ENCODE measurements at regions of chr21 and their contacts with region 1.

Region 1: DNA sequence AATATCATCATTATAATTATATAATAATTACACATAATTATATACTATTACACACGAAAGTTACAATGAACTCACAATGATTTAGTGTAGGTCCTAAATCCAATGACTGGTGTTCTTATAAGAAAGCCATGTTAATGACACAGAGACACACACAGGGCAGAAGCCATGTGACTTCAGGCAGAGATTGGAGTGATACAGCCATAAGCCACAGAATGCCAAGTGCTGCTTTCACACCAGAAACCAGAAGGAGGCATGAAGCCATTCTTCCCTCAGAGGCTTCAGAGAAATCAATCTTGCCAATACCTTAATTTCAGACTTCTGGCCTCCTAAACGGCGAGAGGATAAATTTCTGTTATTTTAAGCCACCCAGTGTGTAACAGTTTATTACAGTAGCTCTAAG is 147.4 kb upstream of the KRTAP19-8 start:
- DNase-seq: no peak
- H3K4me3 Mint-ChIP-seq: peak overlapping the region; percentile 66
- H3K27ac Mint-ChIP-seq: peak overlapping the region; percentile 69
- H3K4me1 Mint-ChIP-seq: peaks cover 75% of the 10 kb centered on the region
- H3K27me3 Mint-ChIP-seq: no peaks in the 10 kb centered on the region

Region 2: GRCh38 chr21:31041295-31042079 is 144.2 kb before region 1 on chr21:
- CTCF ChIA-PET with region 1: no interaction called
- POLR2A ChIA-PET with region 1: no interaction called
- DNase-seq: no peak
- H3K4me3 Mint-ChIP-seq: no peak overlapping the region
- H3K27ac Mint-ChIP-seq: no peak overlapping the region
- H3K4me1 Mint-ChIP-seq: peaks cover 3% of the 10 kb centered on the region
- H3K27me3 Mint-ChIP-seq: peaks cover 6% of the 10 kb centered on the region

Region 3: GRCh38 chr21:31198575-31198974 is 12.9 kb after region 1 on chr21:
- CTCF ChIA-PET with region 1: interaction called, 17 read pairs
- POLR2A ChIA-PET with region 1: interaction called, 10 read pairs
- DNase-seq: no peak
- H3K4me3 Mint-ChIP-seq: no peak overlapping the region
- H3K27ac Mint-ChIP-seq: no peak overlapping the region
- H3K4me1 Mint-ChIP-seq: peaks cover 39% of the 10 kb centered on the region
- H3K27me3 Mint-ChIP-seq: no peaks in the 10 kb centered on the region

Measured in activated CD4-positive, alpha-beta memory T cell treated with anti-CD3 and anti-CD28 coated beads, Interleukin-2, amount 10 ng/mL, durations not matched to agents 7 days and 5 days (primary cell).